ENCODE measurements at regions of chr15 and their contacts with region 1.

Region 1: GRCh38 chr15:52256366-52256765 is 39.2 kb downstream of the MYO5C start:
- DNase-seq: peak; percentile 73
- H3K4me3 Mint-ChIP-seq: no peak overlapping the region
- H3K27ac Mint-ChIP-seq: no peak overlapping the region
- H3K4me1 Mint-ChIP-seq: peaks cover 39% of the 10 kb centered on the region
- H3K27me3 Mint-ChIP-seq: no peaks in the 10 kb centered on the region
- CTCF ChIP-seq: peak; percentile 78

Region 2: GRCh38 chr15:52288051-52288942 is 31.9 kb after region 1 on chr15:
- CTCF ChIA-PET with region 1: interaction called, 34 read pairs
- POLR2A ChIA-PET with region 1: interaction called, 13 read pairs
- intact Hi-C with region 1: no loop called
- DNase-seq: peak; percentile 89
- H3K4me3 Mint-ChIP-seq: peak overlapping the region; percentile 56
- H3K27ac Mint-ChIP-seq: peak overlapping the region; percentile 89
- H3K4me1 Mint-ChIP-seq: peaks cover 45% of the 10 kb centered on the region
- H3K27me3 Mint-ChIP-seq: no peaks in the 10 kb centered on the region
- CTCF ChIP-seq: no peak

Region 3: GRCh38 chr15:52331490-52332240 is 75.3 kb after region 1 on chr15:
- CTCF ChIA-PET with region 1: interaction called, 9 read pairs
- POLR2A ChIA-PET with region 1: interaction called, 3 read pairs
- intact Hi-C with region 1: loop called (anchors 1 kb)
- DNase-seq: peak; percentile 62
- H3K4me3 Mint-ChIP-seq: no peak overlapping the region
- H3K27ac Mint-ChIP-seq: peak overlapping the region; percentile 57
- H3K4me1 Mint-ChIP-seq: peaks cover 21% of the 10 kb centered on the region
- H3K27me3 Mint-ChIP-seq: no peaks in the 10 kb centered on the region
- CTCF ChIP-seq: peak; percentile 46

Region 4: GRCh38 chr15:52528991-52529926 is 272.9 kb after region 1 on chr15:
- CTCF ChIA-PET with region 1: interaction called, 5 read pairs
- POLR2A ChIA-PET with region 1: interaction called, 3 read pairs
- intact Hi-C with region 1: loop called (anchors 1 kb)
- DNase-seq: peak; percentile 65
- H3K4me3 Mint-ChIP-seq: peak overlapping the region; percentile 78
- H3K27ac Mint-ChIP-seq: no peak overlapping the region
- H3K4me1 Mint-ChIP-seq: no peaks in the 10 kb centered on the region
- H3K27me3 Mint-ChIP-seq: no peaks in the 10 kb centered on the region
- CTCF ChIP-seq: no peak

Region 5: DNA sequence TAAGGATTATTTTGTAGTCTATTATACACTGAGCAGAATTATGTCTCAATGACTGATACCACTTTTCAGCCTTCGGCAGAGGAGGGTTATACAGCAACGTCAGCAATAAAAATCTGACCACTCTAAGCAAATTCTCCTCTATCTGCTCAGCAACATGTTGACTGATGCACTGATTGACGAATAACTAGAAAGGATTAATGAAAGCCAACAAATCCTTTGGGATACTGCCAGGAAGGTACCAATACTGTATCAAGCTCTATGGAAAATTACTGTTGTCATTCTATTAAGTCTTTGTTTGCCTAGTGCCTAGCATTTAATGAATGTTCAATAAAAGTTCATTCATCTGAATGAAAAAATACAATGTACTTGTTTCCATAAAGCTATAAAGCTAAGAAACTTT is 307.2 kb after region 1 on chr15:
- CTCF ChIA-PET with region 1: interaction called, 12 read pairs
- POLR2A ChIA-PET with region 1: interaction called, 4 read pairs
- intact Hi-C with region 1: loop called (anchors 1 kb)
- DNase-seq: no peak
- H3K4me3 Mint-ChIP-seq: no peak overlapping the region
- H3K27ac Mint-ChIP-seq: no peak overlapping the region
- H3K4me1 Mint-ChIP-seq: peaks cover 34% of the 10 kb centered on the region
- H3K27me3 Mint-ChIP-seq: no peaks in the 10 kb centered on the region
- CTCF ChIP-seq: no peak

Region 6: GRCh38 chr15:52679232-52680040 is 423.1 kb after region 1 on chr15 and contains the start of gene ATOSA:
- CTCF ChIA-PET with region 1: interaction called, 4 read pairs
- POLR2A ChIA-PET with region 1: interaction called, 5 read pairs
- intact Hi-C with region 1: loop called (anchors 2 kb)
- DNase-seq: peak; percentile 88
- H3K4me3 Mint-ChIP-seq: peak within 1 kb of the TSS; percentile 98
- H3K27ac Mint-ChIP-seq: peak within 1 kb of the TSS; percentile 94
- H3K4me1 Mint-ChIP-seq: peaks cover 5% of the 10 kb centered on the region
- H3K27me3 Mint-ChIP-seq: no peaks in the 10 kb centered on the region
- CTCF ChIP-seq: no peak
- total RNA-seq, gene ATOSA: 21.3 and 27.6 TPM in 2 replicates

Region 7: GRCh38 chr15:52735231-52736089 is 479.1 kb after region 1 on chr15:
- CTCF ChIA-PET with region 1: interaction called, 62 read pairs
- POLR2A ChIA-PET with region 1: interaction called, 6 read pairs
- intact Hi-C with region 1: loop called (anchors 1 kb)
- DNase-seq: peak; percentile 81
- H3K4me3 Mint-ChIP-seq: no peak overlapping the region
- H3K27ac Mint-ChIP-seq: no peak overlapping the region
- H3K4me1 Mint-ChIP-seq: peaks cover 1% of the 10 kb centered on the region
- H3K27me3 Mint-ChIP-seq: no peaks in the 10 kb centered on the region
- CTCF ChIP-seq: peak; percentile 81

Measured in MCF 10A (cell line).